Activated CD4-positive, alpha-beta T cell treated with anti-CD3 and anti-CD28 coated beads, Interleukin-2, amount 10 ng/mL, durations not matched to agents 24 days and 14 days (primary cell): ENCODE measurements at regions of chr19 and their contacts with region 1.

Region 1: GRCh38 chr19:11380653-11381534 is 3.2 kb downstream of the EPOR start:
- DNase-seq: peak; percentile 99
- H3K4me3 Mint-ChIP-seq: peak overlapping the region; percentile 87
- H3K27ac Mint-ChIP-seq: peak overlapping the region; percentile 99
- H3K4me1 Mint-ChIP-seq: peaks cover 42% of the 10 kb centered on the region
- H3K27me3 Mint-ChIP-seq: peaks cover 14% of the 10 kb centered on the region

Region 2: GRCh38 chr19:11096210-11096841 is 284.6 kb before region 1 on chr19:
- intact Hi-C with region 1: loop called (anchors 5 kb)
- DNase-seq: peak; percentile 85
- H3K4me3 Mint-ChIP-seq: peak overlapping the region; percentile 79
- H3K27ac Mint-ChIP-seq: peak overlapping the region; percentile 89
- H3K4me1 Mint-ChIP-seq: peaks cover 51% of the 10 kb centered on the region
- H3K27me3 Mint-ChIP-seq: no peaks in the 10 kb centered on the region

Region 3: DNA sequence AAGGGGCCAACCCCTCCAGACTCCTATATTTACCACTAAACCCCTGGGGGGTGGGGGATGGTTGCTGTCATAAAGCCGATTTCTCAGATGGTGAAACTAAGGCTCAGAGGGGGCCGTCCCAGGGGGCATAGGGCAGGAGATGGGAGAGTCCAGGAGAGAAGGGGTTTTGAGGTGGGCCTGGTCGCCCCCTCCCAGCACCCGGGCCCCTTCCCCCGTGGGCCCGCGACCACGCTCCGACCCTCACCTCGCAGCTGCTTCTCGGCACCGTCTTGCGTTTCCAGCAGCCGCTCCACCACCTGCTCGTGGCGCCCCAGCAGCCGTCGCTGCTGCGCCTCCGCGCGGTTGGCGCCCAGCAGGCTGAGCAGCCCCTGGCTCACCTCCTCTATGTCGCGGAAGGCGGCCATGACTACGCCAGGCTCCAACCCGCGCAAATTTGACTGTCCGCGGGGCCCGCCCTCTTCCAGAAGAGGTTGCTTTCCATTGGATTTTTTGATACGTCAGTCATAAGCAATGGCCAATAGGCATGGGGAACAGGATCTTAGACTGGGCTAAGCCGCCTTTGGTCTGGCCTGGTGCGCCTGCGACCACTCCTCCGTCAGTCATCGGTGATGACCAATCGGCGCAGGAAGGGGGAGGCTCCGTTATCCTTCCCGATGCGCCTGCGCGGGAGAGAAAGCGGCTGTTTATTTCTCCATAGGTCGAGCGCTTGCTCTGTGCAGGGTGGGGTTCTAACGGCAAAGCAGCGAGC is 225.3 kb before region 1 on chr19 and contains the start of gene SPC24:
- intact Hi-C with region 1: loop called (anchors 1 kb)
- DNase-seq: peak; percentile 98
- H3K4me3 Mint-ChIP-seq: peak within 1 kb of the TSS; percentile 84
- H3K27ac Mint-ChIP-seq: peak within 1 kb of the TSS; percentile 81
- H3K4me1 Mint-ChIP-seq: peaks cover 27% of the 10 kb centered on the region
- H3K27me3 Mint-ChIP-seq: no peaks in the 10 kb centered on the region
- total RNA-seq, gene SPC24: 33.1 and 33.8 TPM in 2 replicates

Region 4: DNA sequence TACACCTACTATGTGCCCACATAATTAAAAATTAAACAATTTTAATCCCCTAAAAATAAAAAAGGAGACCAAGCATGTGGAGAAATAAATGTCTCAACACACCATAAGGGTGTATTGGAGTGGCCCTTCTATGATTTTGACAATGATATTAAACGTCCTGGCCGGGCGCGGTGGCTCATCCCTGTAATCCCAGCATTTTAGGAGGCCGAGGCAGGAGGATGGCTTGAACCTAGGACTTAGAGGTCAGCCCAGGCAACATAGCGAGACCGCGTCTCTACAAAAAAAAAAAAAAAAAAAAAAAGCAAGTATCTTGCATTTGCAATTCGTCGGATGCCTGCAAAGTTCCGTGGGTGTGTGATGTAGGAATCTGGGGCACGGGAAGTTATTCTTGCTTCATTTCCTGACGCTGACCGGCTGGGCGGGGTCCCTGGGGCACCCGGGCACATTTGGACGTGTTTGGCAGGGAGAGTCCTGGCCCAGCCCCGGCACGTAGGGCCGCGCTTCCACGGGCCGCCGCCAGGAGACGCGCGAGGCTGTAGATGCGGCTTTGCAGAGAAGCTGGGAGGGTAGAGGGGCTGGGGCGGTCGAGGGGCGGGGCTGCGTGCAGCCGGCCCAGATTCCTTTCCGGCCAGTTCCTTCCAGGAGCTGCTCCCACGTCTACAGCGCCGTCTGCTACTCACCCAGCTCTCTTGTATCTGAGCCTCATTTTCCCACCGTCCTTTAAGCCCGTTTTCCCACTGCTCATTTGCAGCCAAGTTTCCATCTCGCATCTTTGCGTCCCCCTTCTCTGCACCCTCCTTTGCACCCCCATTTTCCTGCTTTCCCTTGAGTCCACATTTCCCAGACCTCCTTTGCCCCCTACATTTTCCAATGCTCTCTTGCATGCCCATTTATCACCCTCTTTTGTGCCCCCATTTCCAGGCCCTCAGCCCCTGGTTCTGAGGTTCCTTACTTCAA is 87.2 kb before region 1 on chr19:
- intact Hi-C with region 1: loop called (anchors 5 kb)
- DNase-seq: peak; percentile 96
- H3K4me3 Mint-ChIP-seq: peak overlapping the region; percentile 66
- H3K27ac Mint-ChIP-seq: no peak overlapping the region
- H3K4me1 Mint-ChIP-seq: peaks cover 4% of the 10 kb centered on the region
- H3K27me3 Mint-ChIP-seq: peaks cover 47% of the 10 kb centered on the region

Region 5: GRCh38 chr19:11306334-11306733 is 74.6 kb before region 1 on chr19:
- intact Hi-C with region 1: no loop called
- DNase-seq: no peak
- H3K4me3 Mint-ChIP-seq: no peak overlapping the region
- H3K27ac Mint-ChIP-seq: no peak overlapping the region
- H3K4me1 Mint-ChIP-seq: no peaks in the 10 kb centered on the region
- H3K27me3 Mint-ChIP-seq: peaks cover 8% of the 10 kb centered on the region

Region 6: DNA sequence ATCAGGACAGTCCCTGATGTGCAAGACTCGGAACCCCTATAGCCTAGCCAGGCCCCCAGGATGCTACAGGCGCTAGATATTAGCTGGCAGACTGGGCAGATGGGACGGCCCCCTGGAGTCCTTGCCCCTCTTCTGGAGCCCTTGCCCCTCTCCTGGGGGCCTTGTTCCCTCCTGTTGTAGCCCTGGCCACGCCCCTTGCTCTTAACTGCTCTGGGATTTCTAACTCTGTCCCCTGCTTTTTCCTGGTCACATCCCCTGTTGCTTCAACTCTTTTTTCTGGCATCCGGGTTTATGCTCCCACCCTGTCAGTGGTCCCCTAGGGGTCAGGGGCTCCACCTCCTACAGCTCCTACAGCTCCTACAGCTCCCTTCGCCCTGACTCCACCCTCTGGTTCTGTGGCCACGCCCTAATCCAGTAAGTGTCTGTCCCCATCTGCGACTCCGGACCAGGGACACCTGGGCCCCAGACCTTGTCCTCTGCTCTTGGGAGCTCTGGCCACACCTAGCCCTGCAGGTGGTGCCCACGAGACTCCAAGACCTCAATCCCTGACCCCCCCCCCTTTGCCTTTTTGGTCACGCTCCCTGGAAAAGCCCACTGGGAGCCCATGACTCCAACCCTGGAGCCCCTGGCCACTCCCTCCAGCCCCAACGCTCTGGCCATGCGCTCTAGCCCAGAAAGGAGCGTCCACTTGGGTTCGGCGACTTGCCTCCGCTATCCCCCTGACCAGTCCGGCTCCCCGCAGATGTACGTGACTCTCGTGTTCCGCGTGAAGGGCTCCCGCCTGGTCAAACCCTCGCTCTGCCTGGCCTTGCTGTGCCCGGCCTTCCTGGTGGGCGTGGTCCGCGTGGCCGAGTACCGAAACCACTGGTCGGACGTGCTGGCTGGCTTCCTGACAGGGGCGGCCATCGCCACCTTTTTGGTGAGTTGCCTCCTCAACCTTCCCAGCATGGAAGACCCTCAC is 18.8 kb before region 1 on chr19:
- intact Hi-C with region 1: no loop called
- DNase-seq: no peak
- H3K4me3 Mint-ChIP-seq: no peak overlapping the region
- H3K27ac Mint-ChIP-seq: no peak overlapping the region
- H3K4me1 Mint-ChIP-seq: no peaks in the 10 kb centered on the region
- H3K27me3 Mint-ChIP-seq: peaks cover 2% of the 10 kb centered on the region

Region 7: DNA sequence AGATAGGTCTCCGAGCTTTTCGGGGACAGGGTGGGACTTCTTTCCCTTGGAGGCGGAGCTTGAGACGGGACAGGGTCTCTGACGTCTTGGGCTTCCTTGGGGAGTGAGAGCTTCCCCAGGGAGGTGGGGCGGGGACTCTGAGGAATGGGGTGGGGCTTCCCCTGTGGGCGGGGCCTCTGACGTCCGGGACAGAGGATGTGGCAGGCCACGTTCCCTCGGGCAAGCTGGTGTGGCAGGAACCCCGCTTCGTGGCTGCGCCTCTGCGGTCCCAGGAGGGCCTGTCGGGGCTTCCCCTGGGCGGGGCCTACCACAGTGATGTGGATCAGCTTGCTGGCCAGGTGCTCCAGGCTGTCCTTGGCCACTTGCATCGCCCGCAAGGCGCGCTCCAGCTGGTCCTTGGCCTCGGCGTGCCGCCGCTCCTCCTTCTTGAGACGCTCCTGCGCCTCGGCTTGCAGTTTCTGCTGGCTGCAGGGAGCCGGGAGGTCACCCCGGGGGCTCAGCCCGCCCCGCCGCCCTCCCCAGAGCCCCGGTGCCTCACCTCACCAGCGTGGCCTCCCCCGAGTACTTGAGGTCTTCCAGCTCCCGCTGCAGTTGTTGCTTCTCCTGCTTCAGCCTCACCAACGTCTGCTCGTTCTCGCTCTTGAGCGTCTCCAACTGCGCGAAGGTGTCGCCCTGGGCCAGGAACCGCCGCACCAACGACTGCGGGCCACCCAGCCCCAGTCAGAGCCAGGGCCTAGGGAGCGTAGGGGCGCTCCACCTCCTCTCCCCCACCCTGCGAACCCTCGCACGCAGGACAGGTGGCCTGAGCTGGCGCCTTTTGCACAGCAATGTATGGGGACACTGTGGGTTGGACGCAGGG is 41.5 kb after region 1 on chr19:
- intact Hi-C with region 1: loop called (anchors 2 kb)
- DNase-seq: peak; percentile 92
- H3K4me3 Mint-ChIP-seq: peak overlapping the region; percentile 82
- H3K27ac Mint-ChIP-seq: peak overlapping the region; percentile 60
- H3K4me1 Mint-ChIP-seq: peaks cover 33% of the 10 kb centered on the region
- H3K27me3 Mint-ChIP-seq: peaks cover 61% of the 10 kb centered on the region

Region 8: GRCh38 chr19:11482384-11483050 is 101.6 kb after region 1 on chr19:
- intact Hi-C with region 1: loop called (anchors 1 kb)
- DNase-seq: peak; percentile 96
- H3K4me3 Mint-ChIP-seq: peak overlapping the region; percentile 84
- H3K27ac Mint-ChIP-seq: peak overlapping the region; percentile 90
- H3K4me1 Mint-ChIP-seq: peaks cover 18% of the 10 kb centered on the region
- H3K27me3 Mint-ChIP-seq: peaks cover 29% of the 10 kb centered on the region

Region 9: GRCh38 chr19:11551603-11552235 is 170.8 kb after region 1 on chr19:
- intact Hi-C with region 1: no loop called
- DNase-seq: no peak
- H3K4me3 Mint-ChIP-seq: no peak overlapping the region
- H3K27ac Mint-ChIP-seq: no peak overlapping the region
- H3K4me1 Mint-ChIP-seq: peaks cover 15% of the 10 kb centered on the region
- H3K27me3 Mint-ChIP-seq: no peaks in the 10 kb centered on the region